ENCODE measurements at regions of chr10 and their contacts with region 1.

Region 1: DNA sequence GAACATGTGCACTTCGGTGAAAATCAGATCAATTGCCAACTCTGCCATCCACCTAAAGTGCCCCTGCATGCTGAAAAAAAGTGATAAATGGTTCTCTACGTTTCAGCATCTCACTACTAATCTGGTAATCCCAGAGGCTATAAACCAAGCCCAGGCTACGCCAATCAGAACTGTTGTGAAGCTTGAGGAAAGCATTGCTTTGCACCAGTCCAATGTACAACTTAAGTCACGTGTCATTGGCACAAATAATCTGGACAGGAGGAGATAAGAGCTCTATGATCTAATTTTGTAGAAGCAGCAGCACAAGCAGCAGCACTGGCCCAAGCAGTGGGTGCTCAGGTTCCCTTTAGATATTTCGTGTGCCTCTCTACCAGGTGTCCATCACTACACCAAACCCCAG is 4.4 kb upstream of the EGR2 start:
- DNase-seq: no peak
- ATAC-seq: no peak
- H3K4me3 ChIP-seq: no peak overlapping the region
- H3K27ac ChIP-seq: no peak overlapping the region
- H3K4me1 ChIP-seq: peaks cover 0 to 16% (median 7%) of the 10 kb centered on the region in 4 donors
- H3K27me3 ChIP-seq: peaks cover 0 to 2% of the 10 kb centered on the region in 2 donors
- CTCF ChIP-seq: no peak
- POLR2A ChIP-seq: no peak

Region 2: DNA sequence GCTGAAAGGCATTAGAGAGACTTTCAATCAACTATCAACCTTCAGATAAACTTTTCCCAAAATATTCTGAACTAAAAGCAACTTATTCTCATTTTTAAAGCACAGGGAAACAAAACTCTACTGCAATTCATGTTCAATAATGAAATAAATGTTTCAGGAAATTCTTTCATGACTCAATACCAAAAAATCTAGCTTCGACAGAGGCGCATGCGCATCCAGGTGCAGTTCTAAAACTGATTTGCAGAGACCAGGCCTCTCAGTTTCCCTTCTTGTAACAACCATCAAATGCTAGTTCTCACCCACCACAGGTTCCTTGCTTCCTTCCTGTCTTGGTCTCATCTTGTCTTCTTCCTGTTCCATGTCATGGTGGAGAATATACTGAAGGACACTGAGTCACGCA is 257.2 kb after region 1 on chr10:
- intact Hi-C with region 1: loop called in 1 of 2 experiments (anchors 5 kb)
- DNase-seq: no peak
- ATAC-seq: no peak
- H3K4me3 ChIP-seq: no peak overlapping the region
- H3K27ac ChIP-seq: no peak overlapping the region
- H3K4me1 ChIP-seq: no peaks in the 10 kb centered on the region
- H3K27me3 ChIP-seq: no peaks in the 10 kb centered on the region
- CTCF ChIP-seq: no peak
- POLR2A ChIP-seq: no peak